GM13977 (cell line): ENCODE measurements at regions of chr5 and their contacts with region 1.

Region 1: DNA sequence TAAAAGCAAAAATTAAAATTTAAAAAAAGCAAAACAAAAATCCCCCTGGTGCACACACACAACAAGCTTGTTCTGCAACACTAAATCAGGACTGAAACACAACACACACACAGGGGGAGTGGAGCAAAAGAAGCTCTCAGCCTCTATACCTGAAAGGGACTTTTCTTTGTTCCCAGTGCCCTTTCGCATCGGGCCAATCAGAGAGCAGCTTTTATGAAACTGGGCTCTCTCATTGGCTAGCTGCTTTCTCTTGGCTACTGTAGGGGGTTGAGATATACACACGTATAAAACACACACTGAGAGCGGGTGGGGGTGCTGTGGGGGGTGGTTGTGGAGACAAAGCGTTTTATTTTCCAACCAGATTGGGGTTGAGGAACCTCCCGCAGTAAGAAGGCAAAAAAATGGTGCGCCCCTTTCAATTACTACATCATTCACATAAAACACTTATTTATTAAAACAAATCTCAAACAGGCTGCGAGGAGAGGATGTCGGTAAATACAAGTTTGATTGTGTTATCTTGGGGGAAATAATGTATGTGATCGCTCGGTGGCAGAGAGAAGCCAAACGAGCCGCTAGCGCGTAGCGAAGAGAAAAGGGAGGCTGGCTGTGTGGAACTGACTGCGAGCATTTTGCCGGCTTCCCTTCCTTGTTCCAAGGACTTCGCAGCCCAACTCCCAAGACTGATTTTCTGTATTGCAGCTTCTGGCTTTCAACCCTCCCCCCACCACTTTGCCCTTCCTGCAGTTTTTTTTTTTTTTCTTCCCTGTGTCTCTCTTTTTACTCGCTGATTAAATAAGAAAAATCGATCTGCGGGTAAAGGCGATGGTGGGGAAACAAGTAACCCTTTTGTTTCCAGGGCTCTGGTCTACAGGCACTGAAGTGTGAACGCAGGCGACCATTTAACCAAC is 2.5 kb upstream of the ZNF608 start:
- DNase-seq: peak; percentile 80
- CTCF ChIP-seq: no peak

Region 2: DNA sequence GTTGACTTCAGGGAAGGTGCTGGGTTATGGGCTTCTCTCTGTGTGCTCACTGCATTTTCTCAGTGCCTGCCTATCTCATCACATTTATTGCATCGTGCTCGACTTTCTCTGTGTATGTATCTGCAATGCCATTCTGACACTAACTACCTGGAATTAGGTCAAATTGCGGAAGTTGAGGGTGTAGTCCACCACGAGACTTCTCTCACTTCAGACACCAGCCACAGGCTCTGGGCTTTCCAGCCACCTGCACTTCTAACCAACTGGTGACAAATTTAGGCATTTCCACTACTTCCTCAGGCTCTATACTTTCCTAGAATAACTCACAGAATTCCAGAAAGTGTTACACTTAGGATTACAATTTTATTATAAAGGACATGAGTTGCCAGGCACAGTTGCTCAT is 186.1 kb after region 1 on chr5:
- in situ Hi-C with region 1: loop called (anchors 10 kb)
- DNase-seq: peak; percentile 42
- CTCF ChIP-seq: no peak

Region 3: GRCh38 chr5:125412561-125413495 is 663.9 kb after region 1 on chr5:
- in situ Hi-C with region 1: loop called (anchors 25 kb)
- DNase-seq: peak; percentile 35
- CTCF ChIP-seq: peak; percentile 41